Activated CD4-positive, alpha-beta T cell treated with anti-CD3 and anti-CD28 coated beads, Interleukin-2, amount 10 ng/mL, durations not matched to agents 24 days and 14 days (primary cell): ENCODE measurements at regions of chr17 and their contacts with region 1.

Region 1: GRCh38 chr17:29931231-29931932 is 1.4 kb upstream of the SSH2 start:
- DNase-seq: peak; percentile 90
- H3K4me3 Mint-ChIP-seq: no peak overlapping the region
- H3K27ac Mint-ChIP-seq: no peak overlapping the region
- H3K4me1 Mint-ChIP-seq: peaks cover 21% of the 10 kb centered on the region
- H3K27me3 Mint-ChIP-seq: no peaks in the 10 kb centered on the region

Region 2: GRCh38 chr17:29568331-29569244 is 362.8 kb before region 1 on chr17 and contains the start of gene TP53I13:
- intact Hi-C with region 1: loop called (anchors 5 kb)
- DNase-seq: peak; percentile 96
- H3K4me3 Mint-ChIP-seq: peak within 1 kb of the TSS; percentile 93
- H3K27ac Mint-ChIP-seq: peak within 1 kb of the TSS; percentile 94
- H3K4me1 Mint-ChIP-seq: peaks cover 27% of the 10 kb centered on the region
- H3K27me3 Mint-ChIP-seq: no peaks in the 10 kb centered on the region
- total RNA-seq, gene TP53I13: 69.7 and 77.9 TPM in 2 replicates

Region 3: GRCh38 chr17:29617125-29617480 is 314.3 kb before region 1 on chr17:
- intact Hi-C with region 1: loop called (anchors 5 kb)
- DNase-seq: peak; percentile 97
- H3K4me3 Mint-ChIP-seq: peak overlapping the region; percentile 83
- H3K27ac Mint-ChIP-seq: peak overlapping the region; percentile 93
- H3K4me1 Mint-ChIP-seq: peaks cover 38% of the 10 kb centered on the region
- H3K27me3 Mint-ChIP-seq: peaks cover 6% of the 10 kb centered on the region

Region 4: GRCh38 chr17:29640413-29640812 is 291.0 kb before region 1 on chr17:
- intact Hi-C with region 1: loop called (anchors 2 kb)
- DNase-seq: no peak
- H3K4me3 Mint-ChIP-seq: no peak overlapping the region
- H3K27ac Mint-ChIP-seq: peak overlapping the region; percentile 70
- H3K4me1 Mint-ChIP-seq: peaks cover 17% of the 10 kb centered on the region
- H3K27me3 Mint-ChIP-seq: no peaks in the 10 kb centered on the region

Region 5: DNA sequence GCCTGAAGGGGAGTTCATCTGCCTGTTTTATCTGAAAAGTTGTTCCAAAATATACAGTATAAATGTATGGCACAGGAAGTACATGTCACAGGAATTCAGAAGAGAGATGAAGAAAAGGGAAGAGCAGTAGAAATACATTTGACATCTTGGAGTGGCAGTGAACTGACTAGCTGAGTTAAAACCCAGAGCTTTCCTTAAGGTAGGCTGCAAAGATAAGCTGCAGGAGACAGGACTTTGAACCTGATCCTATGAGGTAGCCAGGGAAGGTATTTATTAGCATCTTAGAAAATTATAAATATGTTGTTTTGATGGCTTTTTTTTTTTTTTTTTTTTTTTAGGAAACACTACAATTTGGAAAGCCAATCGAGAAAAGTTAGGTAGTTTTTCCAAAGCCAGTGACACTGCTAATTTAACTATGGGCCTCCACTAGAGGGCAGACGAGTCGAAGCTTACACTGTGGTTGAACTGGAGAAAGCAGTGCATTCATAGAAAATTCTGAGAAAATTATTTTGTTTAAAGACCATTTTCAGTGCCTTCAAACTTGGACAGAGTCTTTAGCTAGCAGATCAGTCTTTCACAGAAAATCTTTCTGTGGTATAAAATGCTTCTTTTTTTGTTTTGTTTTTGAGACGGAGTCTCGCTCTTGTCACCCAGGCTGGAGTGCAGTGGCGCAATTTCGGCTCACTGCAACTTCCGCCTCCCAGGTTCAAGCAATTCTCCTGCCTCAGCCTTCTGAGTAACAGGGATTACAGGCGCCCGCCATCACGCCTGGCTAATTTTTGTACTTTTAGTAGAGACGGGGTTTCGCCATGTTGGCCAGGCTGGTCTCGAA is 123.6 kb before region 1 on chr17:
- intact Hi-C with region 1: loop called (anchors 1 kb)
- DNase-seq: peak; percentile 91
- H3K4me3 Mint-ChIP-seq: no peak overlapping the region
- H3K27ac Mint-ChIP-seq: no peak overlapping the region
- H3K4me1 Mint-ChIP-seq: peaks cover 12% of the 10 kb centered on the region
- H3K27me3 Mint-ChIP-seq: no peaks in the 10 kb centered on the region

Region 6: DNA sequence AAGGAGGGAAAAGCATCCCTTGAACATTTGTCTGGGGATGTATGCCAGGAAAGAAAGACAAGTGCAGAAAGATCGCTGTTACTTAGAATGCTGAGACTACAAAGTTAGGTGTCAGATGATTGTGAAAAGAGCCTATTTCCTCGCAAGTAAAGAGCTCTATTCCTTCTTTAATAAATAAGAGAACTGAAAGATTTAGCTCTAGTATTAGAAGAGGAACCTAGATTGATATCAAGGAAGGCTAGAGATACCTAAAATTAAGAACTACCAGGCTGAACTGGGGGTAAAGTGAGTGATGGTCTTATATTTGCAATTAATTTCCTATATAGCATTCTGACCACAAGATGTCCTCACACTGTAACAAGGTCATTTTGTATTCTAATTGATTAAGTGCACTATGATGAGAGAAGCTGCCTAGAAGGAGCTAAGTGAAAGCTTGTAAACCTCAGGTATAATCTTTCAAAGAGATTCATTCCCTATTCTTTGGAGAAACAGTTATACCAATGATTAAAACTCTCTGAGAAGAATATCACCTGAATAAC is 63.7 kb before region 1 on chr17:
- intact Hi-C with region 1: loop called (anchors 2 kb)
- DNase-seq: no peak
- H3K4me3 Mint-ChIP-seq: no peak overlapping the region
- H3K27ac Mint-ChIP-seq: no peak overlapping the region
- H3K4me1 Mint-ChIP-seq: peaks cover 8% of the 10 kb centered on the region
- H3K27me3 Mint-ChIP-seq: no peaks in the 10 kb centered on the region

Region 7: DNA sequence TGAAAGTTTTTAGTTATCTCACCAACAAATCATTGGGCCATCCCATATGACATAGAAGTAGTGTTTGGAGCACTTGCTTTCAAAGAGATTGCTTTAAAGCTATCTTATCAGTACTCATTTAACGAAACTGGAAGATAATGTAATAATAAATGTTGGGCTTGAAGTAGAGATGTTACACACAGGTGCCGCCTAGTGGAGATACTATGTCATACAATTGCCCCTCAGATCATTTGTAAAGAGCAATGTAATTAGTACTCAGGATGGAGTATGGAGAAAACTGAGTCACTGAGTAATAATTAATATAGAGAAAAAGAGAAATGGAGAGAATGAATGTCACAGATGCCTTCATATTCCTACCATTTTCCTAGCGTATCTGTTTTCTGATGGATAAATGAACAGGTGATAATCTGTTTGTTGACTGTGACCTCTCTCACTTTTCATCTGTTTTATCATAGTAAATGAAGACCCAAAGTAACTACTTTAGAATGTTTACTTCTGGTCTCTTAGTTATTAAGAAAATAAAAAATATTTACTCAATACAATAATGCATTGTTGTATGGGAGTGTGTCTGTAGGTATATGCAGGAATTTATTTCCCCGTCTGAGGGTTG is 90.4 kb after region 1 on chr17:
- intact Hi-C with region 1: loop called (anchors 10 kb)
- DNase-seq: peak; percentile 78
- H3K4me3 Mint-ChIP-seq: no peak overlapping the region
- H3K27ac Mint-ChIP-seq: no peak overlapping the region
- H3K4me1 Mint-ChIP-seq: no peaks in the 10 kb centered on the region
- H3K27me3 Mint-ChIP-seq: peaks cover 15% of the 10 kb centered on the region